A549 (cell line): ENCODE measurements at regions of chr22 and their contacts with region 1.

Region 1: DNA sequence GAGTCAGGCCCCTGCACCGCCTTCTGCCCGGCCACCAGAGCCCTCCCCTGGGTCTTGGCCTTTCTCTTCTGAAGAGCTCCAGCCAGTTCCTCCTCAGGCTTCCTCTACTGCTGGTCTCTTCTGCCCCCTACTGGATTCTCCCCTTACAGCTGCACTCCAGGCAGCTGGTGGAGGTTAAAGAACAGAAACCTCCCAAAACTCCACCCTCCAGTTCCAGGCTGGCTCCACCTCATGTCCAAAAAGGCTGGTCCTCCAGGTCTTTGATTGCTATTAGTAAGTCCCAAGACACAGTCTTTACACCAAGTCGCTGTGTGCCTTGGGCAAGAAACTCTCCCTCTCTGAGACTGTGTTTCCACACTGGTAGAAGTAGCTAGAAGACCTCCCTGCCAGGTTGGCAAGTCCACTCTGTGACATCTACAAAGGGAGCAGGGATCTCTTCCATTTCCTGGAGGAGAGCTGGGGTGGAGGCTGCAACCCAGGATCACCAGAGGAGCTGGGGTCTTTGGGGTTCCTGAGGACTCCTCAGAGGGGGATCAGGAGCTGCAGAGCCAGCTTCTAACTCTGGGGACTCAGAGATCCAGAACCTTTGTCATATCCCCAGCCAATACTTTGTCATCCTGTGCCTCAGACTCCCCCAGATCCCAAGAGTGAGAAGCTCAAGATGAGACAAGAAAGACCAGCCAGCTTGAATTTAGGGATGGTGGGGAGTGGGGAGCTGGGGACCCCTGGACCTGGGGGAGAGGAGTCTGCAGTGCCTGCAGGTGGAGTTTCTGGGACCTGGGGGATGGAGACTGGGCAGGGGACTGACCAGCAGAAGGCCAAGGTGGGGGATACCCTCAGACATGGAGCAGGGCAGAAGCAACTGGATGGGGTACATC is 3.4 kb upstream of the IGLL5 start:
- DNase-seq: peak; percentile 65 to 69
- ATAC-seq: peak; percentile 84 to 97
- H3K4me3 ChIP-seq: no peak overlapping the region
- H3K27ac ChIP-seq: no peak overlapping the region
- H3K4me1 ChIP-seq: no peaks in the 10 kb centered on the region
- CTCF ChIP-seq: peak; percentile 60
- EP300 ChIP-seq: no peak
- POLR2A ChIP-seq: no peak
- RAD21 ChIP-seq: peak; percentile 75 to 81

Region 2: DNA sequence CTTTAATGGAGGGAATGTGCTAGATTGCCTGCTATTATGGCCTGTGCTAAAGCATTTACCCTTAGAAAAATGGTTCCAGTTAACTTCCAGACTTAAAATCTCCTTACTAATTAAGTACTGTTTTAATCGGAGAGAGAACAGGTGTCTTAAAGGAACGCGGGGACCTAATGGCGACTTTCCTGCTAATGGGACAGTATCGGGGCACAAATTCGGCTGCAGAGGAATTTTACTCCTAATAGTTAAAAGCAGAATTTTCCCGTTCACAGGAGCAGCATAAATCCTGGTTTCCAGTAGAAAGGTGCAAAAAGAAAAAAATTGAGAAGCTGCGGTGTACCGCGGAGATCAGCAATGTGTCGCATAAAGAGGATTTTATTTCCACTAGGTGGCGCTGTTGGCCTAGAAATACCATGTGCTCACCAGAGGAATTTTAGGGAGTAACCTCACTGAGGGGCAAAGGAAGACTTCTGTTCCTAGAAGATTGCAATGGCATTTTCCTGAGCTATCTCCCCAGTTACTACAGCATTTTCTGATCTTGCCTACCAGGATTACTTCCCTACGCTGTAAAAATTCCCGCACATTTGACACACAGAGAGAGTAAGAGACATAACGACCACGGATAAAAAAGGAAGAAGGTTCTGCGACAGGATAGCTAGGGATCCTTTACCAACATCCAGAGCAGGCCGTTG is 420.3 kb before region 1 on chr22:
- CTCF ChIA-PET with region 1: interaction called, 18 read pairs
- POLR2A ChIA-PET with region 1: interaction called, 3 read pairs
- DNase-seq: peak; percentile 38 to 52
- ATAC-seq: peak; percentile 73 to 93; a peak in 5 of 6 replicates
- H3K4me3 ChIP-seq: peak overlapping the region; percentile 18; the same call in 1 of the 3 replicates
- H3K27ac ChIP-seq: no peak overlapping the region
- H3K4me1 ChIP-seq: no peaks in the 10 kb centered on the region
- CTCF ChIP-seq: peak; percentile 73
- EP300 ChIP-seq: no peak
- POLR2A ChIP-seq: no peak
- RAD21 ChIP-seq: peak; percentile 85 to 86

Region 3: DNA sequence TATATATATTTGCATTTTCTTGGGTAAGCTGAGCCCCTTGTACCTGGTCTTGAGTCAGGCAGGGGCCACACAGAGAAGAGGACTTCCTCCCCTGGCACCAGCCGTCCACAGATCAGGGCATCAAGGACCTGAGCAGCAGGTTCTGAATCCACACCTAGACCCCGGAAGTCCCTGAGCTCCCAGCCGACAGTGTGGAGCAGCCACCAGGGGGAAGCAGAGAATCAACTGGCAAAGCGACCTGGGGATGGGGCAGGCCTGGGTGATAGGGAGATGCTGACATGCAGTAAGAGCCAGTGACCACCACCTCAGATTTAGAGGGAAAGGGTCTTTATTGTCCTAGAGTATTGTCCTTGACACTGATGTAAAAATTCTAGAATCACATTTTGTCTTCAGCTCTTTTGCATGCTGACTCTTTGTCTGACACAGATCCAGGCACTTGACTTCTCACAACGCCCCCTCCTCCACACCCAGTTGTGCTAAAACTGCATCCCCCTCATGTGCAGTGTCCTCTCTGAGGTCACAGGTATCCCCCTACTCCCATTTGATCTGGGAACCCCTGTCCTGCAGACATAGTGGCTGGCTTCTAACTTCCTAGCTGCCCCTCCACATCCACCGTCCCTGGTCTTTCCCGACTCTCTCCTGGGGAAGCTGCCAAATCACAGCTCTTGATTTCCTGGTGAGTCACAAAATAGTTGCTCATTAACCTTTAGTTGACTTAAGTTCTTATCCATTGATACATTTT is 130.6 kb before region 1 on chr22:
- CTCF ChIA-PET with region 1: interaction called, 14 read pairs
- POLR2A ChIA-PET with region 1: no interaction called
- DNase-seq: peak; percentile 54 to 74
- ATAC-seq: peak; percentile 89 to 97
- H3K4me3 ChIP-seq: no peak overlapping the region
- H3K27ac ChIP-seq: 0 out of 6 replicates have a peak overlapping the region, but pooled peaks of 1 of the 2 experiments have one; percentile 39
- H3K4me1 ChIP-seq: peaks cover 5% of the 10 kb centered on the region; the same call in 1 of the 3 replicates
- CTCF ChIP-seq: peak; percentile 43; the same call in 2 of the 3 replicates
- EP300 ChIP-seq: no peak
- POLR2A ChIP-seq: no peak
- RAD21 ChIP-seq: peak; percentile 36 to 46; a peak in 3 of 5 replicates

Region 4: GRCh38 chr22:22787786-22788459 is 96.3 kb before region 1 on chr22:
- CTCF ChIA-PET with region 1: interaction called, 22 read pairs
- POLR2A ChIA-PET with region 1: no interaction called
- DNase-seq: peak; percentile 39 to 52
- ATAC-seq: peak; percentile 80 to 95; a peak in 5 of 6 replicates
- H3K4me3 ChIP-seq: no peak overlapping the region
- H3K27ac ChIP-seq: no peak overlapping the region
- H3K4me1 ChIP-seq: no peaks in the 10 kb centered on the region
- CTCF ChIP-seq: peak; percentile 58; the same call in 2 of the 3 replicates
- EP300 ChIP-seq: no peak
- POLR2A ChIP-seq: no peak
- RAD21 ChIP-seq: peak; percentile 30 to 46; a peak in 4 of 5 replicates

Region 5: GRCh38 chr22:22897091-22897490 is 12.8 kb after region 1 on chr22:
- CTCF ChIA-PET with region 1: interaction called, 14 read pairs
- POLR2A ChIA-PET with region 1: no interaction called
- DNase-seq: no peak
- ATAC-seq: no peak
- H3K4me3 ChIP-seq: no peak overlapping the region
- H3K27ac ChIP-seq: no peak overlapping the region
- H3K4me1 ChIP-seq: no peaks in the 10 kb centered on the region
- CTCF ChIP-seq: no peak
- EP300 ChIP-seq: no peak
- POLR2A ChIP-seq: no peak
- RAD21 ChIP-seq: no peak

Region 6: GRCh38 chr22:22916952-22917290 is 32.7 kb after region 1 on chr22:
- CTCF ChIA-PET with region 1: no interaction called
- POLR2A ChIA-PET with region 1: no interaction called
- DNase-seq: no peak
- ATAC-seq: no peak
- H3K4me3 ChIP-seq: no peak overlapping the region
- H3K27ac ChIP-seq: no peak overlapping the region
- H3K4me1 ChIP-seq: no peaks in the 10 kb centered on the region
- CTCF ChIP-seq: no peak
- EP300 ChIP-seq: no peak
- POLR2A ChIP-seq: no peak
- RAD21 ChIP-seq: no peak

Region 7: DNA sequence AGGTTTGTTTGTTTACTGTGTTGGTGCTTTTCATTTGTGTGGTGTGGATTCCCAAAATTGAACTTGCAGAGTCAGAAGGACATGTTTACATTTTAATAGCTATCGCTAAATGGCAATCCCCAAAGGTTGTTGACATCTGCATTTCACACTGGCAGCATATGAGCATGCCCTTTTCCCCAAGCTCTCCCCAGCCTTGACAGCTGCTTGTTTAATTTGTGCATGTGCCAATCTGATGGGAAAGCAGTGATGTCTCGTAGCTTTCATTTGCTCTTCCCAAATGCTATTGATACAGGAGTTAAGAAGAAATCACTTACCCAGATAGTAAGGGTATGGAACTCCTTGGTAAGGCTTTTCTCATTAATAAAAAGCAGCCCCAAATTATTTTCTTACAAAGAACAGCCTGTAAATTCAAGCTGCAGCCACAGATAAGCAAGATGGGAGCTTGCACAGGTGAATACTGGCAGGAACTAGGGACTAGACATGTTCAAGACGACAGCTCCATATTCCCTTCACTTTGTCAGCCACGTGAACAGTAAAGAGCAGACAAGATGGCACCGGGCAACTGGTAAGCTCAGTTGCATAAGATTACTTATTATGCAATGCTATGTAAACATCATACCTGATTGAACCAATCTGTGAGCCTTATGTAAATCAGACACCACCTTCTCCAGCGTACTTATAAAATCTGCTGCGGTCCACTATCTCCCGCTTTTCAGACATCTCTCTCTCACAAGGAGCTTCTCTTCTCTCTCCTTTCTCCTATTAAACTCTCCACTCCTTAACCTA is 90.7 kb after region 1 on chr22:
- CTCF ChIA-PET with region 1: no interaction called
- POLR2A ChIA-PET with region 1: no interaction called
- DNase-seq: no peak
- ATAC-seq: no peak
- H3K4me3 ChIP-seq: no peak overlapping the region
- H3K27ac ChIP-seq: no peak overlapping the region
- H3K4me1 ChIP-seq: no peaks in the 10 kb centered on the region
- CTCF ChIP-seq: no peak
- EP300 ChIP-seq: no peak
- POLR2A ChIP-seq: no peak
- RAD21 ChIP-seq: no peak